WTC11 (cell line): ENCODE measurements at regions of chr2 and their contacts with region 1.

Region 1: DNA sequence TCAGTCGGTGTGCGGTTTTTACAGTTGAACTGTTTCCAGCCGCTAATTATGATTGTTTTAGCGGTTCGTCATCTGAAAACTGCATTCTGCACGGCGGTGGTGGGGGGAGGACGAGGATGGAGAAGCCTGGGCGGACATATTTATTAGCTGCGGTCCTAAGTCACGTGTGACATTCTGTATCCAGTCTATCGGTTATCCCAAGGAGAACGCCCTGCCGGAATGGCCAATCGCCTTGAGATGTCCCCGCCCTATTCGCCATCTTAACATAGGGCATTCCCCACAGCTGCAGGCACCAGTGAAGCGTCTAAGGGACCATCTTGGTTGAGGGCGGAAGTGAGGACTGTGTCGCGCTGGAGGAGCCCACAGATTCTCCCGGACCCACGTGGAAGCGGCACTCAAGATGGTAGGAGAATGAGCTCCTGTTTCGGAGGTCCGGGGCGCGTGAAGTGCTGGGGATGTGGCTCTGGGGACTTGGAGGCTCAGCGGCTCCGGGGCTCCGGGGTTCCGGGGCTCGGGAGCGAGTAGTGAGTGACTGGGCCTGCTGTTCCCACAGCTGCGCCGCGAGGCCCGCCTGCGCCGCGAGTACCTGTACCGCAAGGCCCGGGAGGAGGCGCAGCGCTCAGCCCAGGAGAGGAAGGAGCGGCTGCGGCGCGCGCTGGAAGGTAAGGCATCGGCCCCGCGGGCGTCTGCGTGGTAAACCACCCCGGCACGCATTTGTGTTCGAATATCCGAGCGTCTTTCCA is at the start of gene IMP4:
- DNase-seq: peak; percentile 94
- ATAC-seq: peak; percentile 89
- H3K4me3 Mint-ChIP-seq: peak within 1 kb of the TSS; percentile 100
- H3K27ac Mint-ChIP-seq: peak within 1 kb of the TSS; percentile 98
- H3K4me1 Mint-ChIP-seq: peaks cover 13% of the 10 kb centered on the region
- H3K27me3 Mint-ChIP-seq: no peaks in the 10 kb centered on the region
- CTCF ChIP-seq: no peak
- total RNA-seq, gene IMP4: 80.4 to 89.2 TPM (median 85.2 TPM) in 3 replicates

Region 2: GRCh38 chr2:130307850-130308249 is 34.9 kb before region 1 on chr2:
- CTCF ChIA-PET with region 1: no interaction called
- POLR2A ChIA-PET with region 1: no interaction called
- DNase-seq: no peak
- ATAC-seq: no peak
- H3K4me3 Mint-ChIP-seq: no peak overlapping the region
- H3K27ac Mint-ChIP-seq: no peak overlapping the region
- H3K4me1 Mint-ChIP-seq: no peaks in the 10 kb centered on the region
- H3K27me3 Mint-ChIP-seq: no peaks in the 10 kb centered on the region; the same call in 1 of the 2 replicates
- CTCF ChIP-seq: no peak

Region 3: DNA sequence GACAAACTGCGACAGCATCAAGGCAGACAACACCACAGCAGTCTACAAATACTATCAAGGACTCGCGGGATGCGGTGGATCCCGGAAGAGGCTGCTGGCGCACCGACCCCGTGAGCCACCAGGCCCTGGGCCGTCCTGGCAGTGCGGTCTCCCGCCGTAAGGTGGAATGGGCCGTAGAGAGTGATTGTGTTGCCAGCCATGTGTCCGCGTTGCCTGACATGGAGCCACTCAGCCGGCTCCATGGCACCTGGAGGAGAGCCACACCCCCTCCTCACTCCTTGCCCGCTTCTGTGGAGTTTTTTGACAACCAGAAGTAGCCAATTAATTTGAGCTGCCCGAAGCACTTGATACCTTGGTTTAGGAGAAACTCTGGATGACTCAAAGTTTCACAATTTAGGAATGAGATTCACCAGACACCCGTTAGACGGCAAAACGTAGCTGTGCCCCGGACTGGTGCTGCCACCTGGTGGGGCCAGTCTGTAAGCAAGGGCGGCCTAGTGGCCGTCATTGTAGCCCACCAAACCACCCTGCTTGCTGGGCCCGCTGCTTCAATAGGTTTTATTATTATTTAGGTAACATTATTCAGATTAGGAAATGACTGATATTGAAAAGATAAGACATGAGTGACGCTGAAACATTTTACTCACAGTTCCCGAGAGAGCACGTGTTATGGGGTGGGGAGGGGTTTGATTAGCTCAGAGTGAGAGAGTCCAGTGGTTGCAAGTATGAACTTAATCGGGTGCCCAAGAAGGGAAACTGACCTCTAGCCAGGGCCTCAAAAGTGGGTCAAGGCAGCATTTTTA is 10.2 kb before region 1 on chr2:
- CTCF ChIA-PET with region 1: interaction called, 18 read pairs
- POLR2A ChIA-PET with region 1: interaction called, 4 read pairs
- DNase-seq: peak; percentile 83
- ATAC-seq: peak; percentile 71
- H3K4me3 Mint-ChIP-seq: peak overlapping the region; percentile 71
- H3K27ac Mint-ChIP-seq: no peak overlapping the region
- H3K4me1 Mint-ChIP-seq: peaks cover 20% of the 10 kb centered on the region
- H3K27me3 Mint-ChIP-seq: peaks cover 39% of the 10 kb centered on the region
- CTCF ChIP-seq: peak; percentile 89

Region 4: GRCh38 chr2:130355578-130356431 is 13.1 kb after region 1 on chr2 and contains the start of gene PTPN18:
- CTCF ChIA-PET with region 1: interaction called, 11 read pairs
- POLR2A ChIA-PET with region 1: interaction called, 3 read pairs
- DNase-seq: peak; percentile 59
- ATAC-seq: peak; percentile 85
- H3K4me3 Mint-ChIP-seq: peak within 1 kb of the TSS; percentile 78
- H3K27ac Mint-ChIP-seq: no peak within 1 kb of the TSS
- H3K4me1 Mint-ChIP-seq: peaks cover 17% of the 10 kb centered on the region
- H3K27me3 Mint-ChIP-seq: peaks cover 35% of the 10 kb centered on the region
- CTCF ChIP-seq: no peak; the same call in 1 of the 2 replicates
- total RNA-seq, gene PTPN18: 15.7 to 21.8 TPM (median 21.0 TPM) in 3 replicates